ENCODE measurements at regions of chr17 and their contacts with region 1.

Region 1: GRCh38 chr17:74798239-74798707 is 22.1 kb upstream of the NAT9 start:
- DNase-seq: no peak
- H3K4me3 ChIP-seq: no peak overlapping the region
- H3K27ac ChIP-seq: no peak overlapping the region
- H3K4me1 ChIP-seq: peaks cover 11% of the 10 kb centered on the region
- H3K27me3 ChIP-seq: no peaks in the 10 kb centered on the region
- CTCF ChIP-seq: no peak

Region 2: GRCh38 chr17:74864866-74865395 is 66.7 kb after region 1 on chr17:
- intact Hi-C with region 1: loop called (anchors 5 kb)
- DNase-seq: peak; percentile 75
- H3K4me3 ChIP-seq: no peak overlapping the region
- H3K27ac ChIP-seq: no peak overlapping the region
- H3K4me1 ChIP-seq: peaks cover 24% of the 10 kb centered on the region
- H3K27me3 ChIP-seq: peaks cover 20% of the 10 kb centered on the region
- CTCF ChIP-seq: peak; percentile 96